Activated CD4-positive, alpha-beta T cell treated with anti-CD3 and anti-CD28 coated beads for 36 hours (primary cell): ENCODE measurements at regions of chr19 and their contacts with region 1.

Region 1: DNA sequence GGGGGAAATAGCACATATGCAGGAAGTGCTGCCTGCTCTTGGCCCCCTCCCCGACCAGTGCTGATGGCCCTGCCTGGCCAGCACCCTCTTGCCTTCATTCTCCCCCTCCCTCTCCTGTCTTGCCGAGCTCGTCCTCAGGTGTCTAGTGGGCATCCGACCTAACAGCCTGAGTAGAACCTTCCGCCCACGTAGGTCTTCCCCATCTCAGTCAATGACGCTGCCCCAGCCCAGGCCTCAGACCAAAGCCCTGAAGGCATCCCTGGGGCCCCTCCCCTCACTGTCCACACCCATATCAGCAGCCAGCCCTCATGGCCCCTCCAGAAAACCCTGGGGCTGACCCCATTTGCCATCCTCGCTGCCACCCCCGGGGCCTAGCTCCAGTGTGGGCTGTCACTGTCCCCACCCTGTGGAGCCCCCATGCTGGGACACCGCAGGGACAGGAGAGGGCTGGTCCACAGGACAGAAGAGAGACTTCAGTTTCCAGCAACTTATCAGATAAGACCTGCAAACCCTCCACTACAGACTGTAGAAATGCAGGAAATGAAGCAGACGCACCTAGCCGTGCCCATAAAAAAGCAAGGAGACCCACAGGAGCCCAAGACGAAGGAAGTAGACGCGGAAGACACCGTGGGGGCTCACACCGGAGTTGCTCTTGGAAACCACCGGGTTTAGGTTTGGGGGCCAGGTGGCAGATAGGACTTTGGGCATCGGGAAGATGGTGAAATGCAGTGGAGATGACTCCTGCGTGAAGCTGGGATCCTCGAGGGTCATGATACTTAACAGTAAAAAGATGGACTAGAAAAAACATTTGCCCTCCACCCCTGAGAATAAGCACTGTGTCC is 38.3 kb downstream of the AP1M1 start:
- DNase-seq: no peak
- ATAC-seq: no peak
- H3K4me3 Mint-ChIP-seq: no peak overlapping the region
- H3K27ac Mint-ChIP-seq: no peak overlapping the region
- H3K4me1 Mint-ChIP-seq: peaks cover 17% of the 10 kb centered on the region
- H3K27me3 Mint-ChIP-seq: no peaks in the 10 kb centered on the region

Region 2: DNA sequence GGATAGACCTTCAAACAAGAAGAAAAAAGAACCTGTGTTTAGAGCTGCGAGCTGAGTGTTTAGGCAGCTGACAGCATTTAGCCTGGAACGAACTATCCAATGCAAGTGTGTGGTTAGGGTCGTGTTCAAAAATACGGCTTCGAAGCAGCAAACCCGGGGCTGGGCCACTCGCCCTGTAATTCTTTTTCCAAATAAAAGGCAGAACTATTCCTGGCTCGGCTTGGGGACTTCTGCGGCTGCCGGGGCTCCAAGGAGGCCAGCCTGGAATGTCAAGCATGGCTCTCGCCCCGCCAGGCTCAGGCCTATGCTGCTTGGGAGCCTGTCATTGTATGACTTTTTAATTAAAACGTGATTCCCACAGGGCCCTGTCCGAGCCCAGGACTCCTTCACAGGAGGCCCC is 36.9 kb after region 1 on chr19:
- CTCF ChIA-PET with region 1: no interaction called
- POLR2A ChIA-PET with region 1: interaction called, 11 read pairs
- intact Hi-C with region 1: no loop called
- DNase-seq: no peak
- ATAC-seq: no peak
- H3K4me3 Mint-ChIP-seq: no peak overlapping the region
- H3K27ac Mint-ChIP-seq: no peak overlapping the region
- H3K4me1 Mint-ChIP-seq: peaks cover 9% of the 10 kb centered on the region
- H3K27me3 Mint-ChIP-seq: peaks cover 5% of the 10 kb centered on the region